Endothelial cell of umbilical vein (primary cell): ENCODE measurements at regions of chr1 and their contacts with region 1.

Region 1: DNA sequence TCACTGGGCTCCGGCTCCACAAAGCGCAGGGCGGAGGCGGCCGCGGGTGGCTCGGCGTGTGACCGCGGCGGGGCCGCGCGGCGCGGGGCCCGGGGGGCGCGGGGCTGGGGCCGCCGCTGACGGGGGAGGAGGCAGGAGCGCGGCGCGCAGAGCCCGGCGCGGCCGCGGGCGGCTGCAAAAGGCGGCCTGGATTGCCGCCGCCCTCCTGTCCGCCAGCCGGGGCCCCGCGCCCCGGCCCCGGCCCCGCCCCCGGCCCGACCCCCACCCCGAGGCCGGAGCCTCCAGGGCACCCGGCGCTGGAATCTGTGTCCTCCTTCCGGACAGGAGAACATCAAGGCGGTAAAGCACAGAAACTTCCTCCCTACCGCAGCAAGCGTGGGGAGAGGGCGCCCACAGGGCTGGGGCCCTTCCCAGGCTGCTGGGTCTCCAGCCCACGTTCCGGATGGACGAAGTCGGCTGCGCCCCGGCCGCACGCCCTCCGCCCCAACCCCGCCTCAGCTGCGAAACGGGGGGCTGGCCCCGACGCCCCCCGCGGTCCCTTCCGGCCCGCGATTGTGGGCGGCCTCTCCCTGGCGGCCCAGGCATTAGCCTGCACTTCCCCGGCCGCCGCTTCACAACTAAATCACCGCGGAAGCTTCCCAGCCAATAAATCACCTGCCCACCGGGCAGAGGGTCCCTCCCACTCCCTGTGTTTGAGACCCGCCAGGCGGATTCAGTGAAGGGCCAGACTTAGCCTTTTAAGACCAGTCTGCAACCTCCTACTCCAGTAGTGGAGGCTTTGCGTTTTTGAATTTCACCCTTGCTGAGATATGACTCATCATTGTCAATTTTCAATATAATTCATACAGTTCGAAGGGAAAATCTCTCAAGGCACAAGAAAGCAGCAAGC is 106.0 kb downstream of the SLC45A1 start:
- DNase-seq: peak; percentile 75
- H3K4me3 ChIP-seq: peak overlapping the region; percentile 79 to 90 (median 87)
- H3K27ac ChIP-seq: peak overlapping the region; percentile 72
- H3K4me1 ChIP-seq: peaks cover 23% of the 10 kb centered on the region
- H3K27me3 ChIP-seq: no peaks in the 10 kb centered on the region
- CTCF ChIP-seq: no peak
- POLR2A ChIP-seq: no peak

Region 2: GRCh38 chr1:8077120-8077573 is 346.7 kb before region 1 on chr1:
- CTCF ChIA-PET with region 1: no interaction called
- POLR2A ChIA-PET with region 1: no interaction called
- dilution Hi-C with region 1: no loop called
- intact Hi-C with region 1: no loop called
- DNase-seq: peak; percentile 94
- H3K4me3 ChIP-seq: no peak overlapping the region
- H3K27ac ChIP-seq: peak overlapping the region; percentile 76
- H3K4me1 ChIP-seq: peaks cover 22% of the 10 kb centered on the region
- H3K27me3 ChIP-seq: no peaks in the 10 kb centered on the region
- CTCF ChIP-seq: no peak
- POLR2A ChIP-seq: no peak

Region 3: GRCh38 chr1:8374812-8375211 is 49.1 kb before region 1 on chr1:
- CTCF ChIA-PET with region 1: interaction called, 4 read pairs
- POLR2A ChIA-PET with region 1: no interaction called
- dilution Hi-C with region 1: no loop called
- intact Hi-C with region 1: loop called (anchors 1 kb)
- DNase-seq: peak; percentile 55
- H3K4me3 ChIP-seq: no peak overlapping the region
- H3K27ac ChIP-seq: no peak overlapping the region
- H3K4me1 ChIP-seq: peaks cover 24% of the 10 kb centered on the region
- H3K27me3 ChIP-seq: no peaks in the 10 kb centered on the region
- CTCF ChIP-seq: peak; percentile 28 to 47
- POLR2A ChIP-seq: no peak

Region 4: GRCh38 chr1:8396786-8397406 is 27.0 kb before region 1 on chr1:
- CTCF ChIA-PET with region 1: interaction called, 3 read pairs
- POLR2A ChIA-PET with region 1: no interaction called
- dilution Hi-C with region 1: no loop called
- intact Hi-C with region 1: loop called (anchors 1 kb)
- DNase-seq: peak; percentile 71
- H3K4me3 ChIP-seq: no peak overlapping the region
- H3K27ac ChIP-seq: peak overlapping the region; percentile 62
- H3K4me1 ChIP-seq: peaks cover 49% of the 10 kb centered on the region
- H3K27me3 ChIP-seq: no peaks in the 10 kb centered on the region
- CTCF ChIP-seq: no peak
- POLR2A ChIP-seq: no peak

Region 5: DNA sequence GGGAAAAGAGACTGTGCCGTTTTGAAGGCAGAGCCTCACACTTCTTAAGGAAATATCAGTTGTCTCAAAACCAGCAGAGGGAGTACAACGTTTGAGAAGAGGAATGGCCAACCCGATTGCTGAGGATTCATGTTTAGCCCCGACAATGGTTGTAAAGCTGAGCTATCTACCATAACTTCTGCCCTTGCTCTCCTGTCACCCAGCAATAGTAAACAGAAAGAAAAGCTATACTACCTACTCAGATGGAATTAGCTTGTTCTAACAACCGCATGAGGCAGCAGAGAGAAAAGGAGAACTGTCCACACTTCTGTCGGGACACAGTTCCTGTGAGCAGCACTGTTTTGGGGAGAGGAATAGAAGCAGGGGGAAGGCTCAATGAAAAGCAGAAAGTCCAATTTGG is 14.8 kb before region 1 on chr1:
- CTCF ChIA-PET with region 1: interaction called, 28 read pairs
- POLR2A ChIA-PET with region 1: interaction called, 4 read pairs
- dilution Hi-C with region 1: no loop called
- intact Hi-C with region 1: loop called (anchors 1 kb)
- DNase-seq: peak; percentile 76
- H3K4me3 ChIP-seq: no peak overlapping the region
- H3K27ac ChIP-seq: peak overlapping the region; percentile 62
- H3K4me1 ChIP-seq: peaks cover 53% of the 10 kb centered on the region
- H3K27me3 ChIP-seq: no peaks in the 10 kb centered on the region
- CTCF ChIP-seq: peak; percentile 37 to 42
- POLR2A ChIP-seq: no peak

Region 6: DNA sequence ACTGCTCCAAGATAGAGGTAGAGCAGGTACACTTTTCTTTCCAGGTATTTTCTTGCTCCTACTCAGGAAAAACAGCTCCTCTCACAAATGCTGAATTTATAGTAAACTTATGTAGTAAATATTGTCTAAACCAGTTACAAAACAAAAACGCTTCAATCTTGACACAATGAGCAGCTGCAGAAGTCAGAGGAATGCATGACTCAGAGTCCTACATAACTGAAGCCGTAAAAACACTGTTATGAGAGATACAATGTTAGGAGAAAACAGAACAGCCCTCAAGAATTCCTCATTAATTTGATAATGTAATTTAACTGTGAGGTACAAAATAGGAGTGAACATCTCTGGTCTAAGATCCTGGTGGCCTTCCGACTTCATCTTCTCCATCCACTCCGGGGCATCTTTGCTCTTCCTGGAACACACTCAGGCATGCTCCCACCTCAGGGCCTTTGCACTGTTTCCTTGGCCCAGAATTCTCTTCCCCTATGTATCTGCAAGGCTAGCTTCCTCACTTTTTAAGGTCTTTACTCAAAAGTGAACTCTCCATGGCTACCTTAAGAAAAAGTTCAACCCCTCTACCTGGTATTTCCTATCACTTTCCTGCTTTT is 32.5 kb after region 1 on chr1:
- CTCF ChIA-PET with region 1: no interaction called
- POLR2A ChIA-PET with region 1: no interaction called
- dilution Hi-C with region 1: no loop called
- intact Hi-C with region 1: loop called (anchors 1 kb)
- DNase-seq: peak; percentile 78
- H3K4me3 ChIP-seq: no peak overlapping the region
- H3K27ac ChIP-seq: peak overlapping the region; percentile 67
- H3K4me1 ChIP-seq: peaks cover 31% of the 10 kb centered on the region
- H3K27me3 ChIP-seq: no peaks in the 10 kb centered on the region
- CTCF ChIP-seq: no peak
- POLR2A ChIP-seq: no peak

Region 7: DNA sequence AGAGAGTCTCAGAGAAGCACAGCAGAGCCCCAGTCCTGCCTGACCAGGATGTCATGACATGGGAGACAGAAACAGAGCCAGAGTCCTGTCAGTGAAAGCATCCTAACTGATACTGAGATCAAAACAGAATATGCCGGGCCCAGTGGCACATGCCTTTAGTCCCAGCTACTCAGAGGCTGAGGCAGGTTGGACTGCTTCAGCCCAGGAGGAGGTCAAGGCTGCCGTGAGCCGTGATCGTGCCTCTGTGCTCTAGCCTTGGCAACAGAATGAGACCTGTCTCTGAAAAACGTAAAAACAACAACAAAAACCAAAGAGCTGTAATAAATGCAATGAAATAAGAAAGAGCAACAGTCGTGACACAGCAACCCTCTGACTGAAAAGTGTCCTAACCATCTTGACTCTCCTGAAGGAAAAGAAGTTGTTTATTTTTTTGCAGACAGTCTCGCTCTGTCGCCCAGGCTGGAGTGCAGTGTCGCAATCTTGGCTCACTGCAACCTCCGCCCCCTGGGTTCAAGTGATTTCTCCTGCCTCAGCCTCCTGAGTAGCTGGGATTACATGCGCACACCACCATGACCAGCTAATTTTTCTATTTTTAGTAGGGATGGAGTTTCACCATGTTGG is 83.2 kb after region 1 on chr1:
- CTCF ChIA-PET with region 1: no interaction called
- POLR2A ChIA-PET with region 1: no interaction called
- dilution Hi-C with region 1: no loop called
- intact Hi-C with region 1: no loop called
- DNase-seq: no peak
- H3K4me3 ChIP-seq: no peak overlapping the region
- H3K27ac ChIP-seq: no peak overlapping the region
- H3K4me1 ChIP-seq: no peaks in the 10 kb centered on the region
- H3K27me3 ChIP-seq: no peaks in the 10 kb centered on the region
- CTCF ChIP-seq: no peak
- POLR2A ChIP-seq: no peak

Region 8: GRCh38 chr1:8702850-8703810 is 279.2 kb after region 1 on chr1:
- CTCF ChIA-PET with region 1: interaction called, 4 read pairs
- POLR2A ChIA-PET with region 1: no interaction called
- dilution Hi-C with region 1: no loop called
- intact Hi-C with region 1: loop called (anchors 2 kb)
- DNase-seq: peak; percentile 96
- H3K4me3 ChIP-seq: peak overlapping the region; percentile 61 to 94 (median 80)
- H3K27ac ChIP-seq: peak overlapping the region; percentile 77
- H3K4me1 ChIP-seq: peaks cover 17% of the 10 kb centered on the region
- H3K27me3 ChIP-seq: no peaks in the 10 kb centered on the region
- CTCF ChIP-seq: peak in 1 of 2 donors; percentile 20
- POLR2A ChIP-seq: peak; percentile 95

Region 9: GRCh38 chr1:8858888-8859706 is 435.2 kb after region 1 on chr1:
- CTCF ChIA-PET with region 1: no interaction called
- POLR2A ChIA-PET with region 1: no interaction called
- dilution Hi-C with region 1: no loop called
- intact Hi-C with region 1: loop called (anchors 10 kb)
- DNase-seq: peak; percentile 83
- H3K4me3 ChIP-seq: no peak overlapping the region
- H3K27ac ChIP-seq: peak overlapping the region; percentile 80
- H3K4me1 ChIP-seq: peaks cover 36% of the 10 kb centered on the region
- H3K27me3 ChIP-seq: no peaks in the 10 kb centered on the region
- CTCF ChIP-seq: peak; percentile 65
- POLR2A ChIP-seq: peak; percentile 33